Panc1 (cell line): ENCODE measurements at regions of chr3 and their contacts with region 1.

Region 1: DNA sequence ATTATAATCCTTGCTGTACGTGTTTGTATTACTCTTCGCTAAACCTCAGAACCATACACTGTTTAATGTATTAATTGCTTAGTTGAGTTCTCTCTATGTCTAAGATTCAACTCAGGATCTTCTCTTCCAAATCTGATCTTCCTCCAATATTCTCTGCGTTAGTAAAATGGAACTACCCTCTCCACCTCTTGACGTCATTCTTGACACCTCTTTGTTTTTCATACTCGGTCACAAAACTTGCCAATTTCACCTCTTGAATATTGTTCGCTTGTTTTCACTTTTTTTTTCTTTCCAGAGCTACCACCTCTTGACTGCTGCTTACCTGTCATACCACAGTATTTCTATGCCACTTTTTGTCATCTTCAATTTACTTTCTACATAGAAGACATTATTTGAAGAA is 447.7 kb downstream of the CADM2 start:
- DNase-seq: no peak
- ATAC-seq: no peak
- H3K4me3 ChIP-seq: no peak overlapping the region
- H3K27ac ChIP-seq: no peak overlapping the region
- H3K4me1 ChIP-seq: no peaks in the 10 kb centered on the region
- H3K27me3 ChIP-seq: no peaks in the 10 kb centered on the region
- CTCF ChIP-seq: no peak

Region 2: GRCh38 chr3:86923071-86923491 is 1516.6 kb after region 1 on chr3:
- CTCF ChIA-PET with region 1: no interaction called
- POLR2A ChIA-PET with region 1: interaction called, 19 read pairs
- in situ Hi-C with region 1: no loop called
- intact Hi-C with region 1: no loop called
- DNase-seq: no peak
- ATAC-seq: no peak
- H3K4me3 ChIP-seq: no peak overlapping the region
- H3K27ac ChIP-seq: no peak overlapping the region
- H3K4me1 ChIP-seq: no peaks in the 10 kb centered on the region
- H3K27me3 ChIP-seq: no peaks in the 10 kb centered on the region
- CTCF ChIP-seq: no peak